Dendritic cell treated with granulocyte-macrophage colony-stimulating factor and Interleukin-4, amounts not matched to agents 40 ng/mL and 50 ng/mL, for 4 days (primary cell): ENCODE measurements at regions of chr11 and their contacts with region 1.

Region 1: DNA sequence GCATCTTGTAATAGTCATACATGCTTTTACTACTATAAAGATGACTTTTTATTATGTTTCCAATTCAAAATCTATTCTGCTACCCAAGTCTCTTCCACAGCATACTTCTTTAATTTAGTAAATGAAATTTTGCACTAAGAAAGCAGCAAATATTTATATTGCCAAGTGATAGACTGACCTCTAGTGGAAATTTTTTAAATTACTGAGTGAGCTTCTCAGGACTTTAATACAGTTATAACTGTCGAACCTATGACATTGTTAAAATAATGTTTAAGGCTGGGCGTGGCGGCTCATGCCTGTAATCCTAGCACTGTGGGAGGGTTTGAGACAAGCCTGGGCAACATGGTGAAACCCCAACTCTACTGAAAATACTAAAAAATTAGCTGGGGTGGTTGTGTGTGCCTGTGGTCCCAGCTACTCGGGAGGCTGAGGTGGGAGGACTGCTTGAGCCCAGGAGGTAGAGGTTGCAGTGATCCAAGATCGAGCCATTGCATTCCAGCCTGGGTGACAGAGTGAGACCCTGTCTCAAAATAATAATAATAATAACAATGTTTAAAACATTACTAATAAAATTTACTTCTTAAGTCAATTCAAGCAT is 27.3 kb downstream of the STK33 start:
- H3K4me3 Mint-ChIP-seq: no peak overlapping the region
- H3K27ac Mint-ChIP-seq: no peak overlapping the region
- H3K4me1 Mint-ChIP-seq: no peaks in the 10 kb centered on the region
- H3K27me3 Mint-ChIP-seq: peaks cover 2% of the 10 kb centered on the region

Region 2: GRCh38 chr11:8033305-8034105 is 533.2 kb before region 1 on chr11:
- intact Hi-C with region 1: loop called (anchors 10 kb)
- H3K4me3 Mint-ChIP-seq: no peak overlapping the region
- H3K27ac Mint-ChIP-seq: no peak overlapping the region
- H3K4me1 Mint-ChIP-seq: peaks cover 5% of the 10 kb centered on the region
- H3K27me3 Mint-ChIP-seq: peaks cover 17% of the 10 kb centered on the region

Region 3: DNA sequence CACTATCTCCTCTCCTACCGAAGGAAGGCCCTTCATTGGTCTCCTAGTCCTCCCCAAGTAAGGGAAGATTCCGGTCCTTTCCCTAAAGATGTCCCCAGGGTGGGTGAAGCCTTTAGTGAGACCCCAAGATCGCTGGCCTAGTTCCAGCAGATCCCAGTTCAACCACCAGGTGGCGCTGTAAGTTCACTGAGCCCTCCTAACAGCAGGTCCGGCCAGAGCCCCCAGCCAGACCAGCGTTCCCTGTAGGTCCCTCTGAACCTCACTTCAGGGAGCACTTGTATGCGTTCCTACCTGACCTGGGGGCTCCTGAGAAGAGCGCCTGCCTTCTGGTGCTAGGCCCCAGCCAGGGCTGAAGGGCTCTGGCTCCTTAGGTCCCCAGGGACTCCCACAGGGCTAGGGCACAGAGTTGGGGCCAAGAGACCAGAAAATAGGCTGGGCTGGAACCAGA is 341.1 kb before region 1 on chr11:
- intact Hi-C with region 1: loop called (anchors 1 kb)
- H3K4me3 Mint-ChIP-seq: no peak overlapping the region
- H3K27ac Mint-ChIP-seq: no peak overlapping the region
- H3K4me1 Mint-ChIP-seq: peaks cover 10% of the 10 kb centered on the region
- H3K27me3 Mint-ChIP-seq: peaks cover 7% of the 10 kb centered on the region

Region 4: GRCh38 chr11:8298801-8299786 is 267.6 kb before region 1 on chr11:
- intact Hi-C with region 1: no loop called
- H3K4me3 Mint-ChIP-seq: no peak overlapping the region
- H3K27ac Mint-ChIP-seq: no peak overlapping the region
- H3K4me1 Mint-ChIP-seq: no peaks in the 10 kb centered on the region
- H3K27me3 Mint-ChIP-seq: peaks cover 11% of the 10 kb centered on the region

Region 5: DNA sequence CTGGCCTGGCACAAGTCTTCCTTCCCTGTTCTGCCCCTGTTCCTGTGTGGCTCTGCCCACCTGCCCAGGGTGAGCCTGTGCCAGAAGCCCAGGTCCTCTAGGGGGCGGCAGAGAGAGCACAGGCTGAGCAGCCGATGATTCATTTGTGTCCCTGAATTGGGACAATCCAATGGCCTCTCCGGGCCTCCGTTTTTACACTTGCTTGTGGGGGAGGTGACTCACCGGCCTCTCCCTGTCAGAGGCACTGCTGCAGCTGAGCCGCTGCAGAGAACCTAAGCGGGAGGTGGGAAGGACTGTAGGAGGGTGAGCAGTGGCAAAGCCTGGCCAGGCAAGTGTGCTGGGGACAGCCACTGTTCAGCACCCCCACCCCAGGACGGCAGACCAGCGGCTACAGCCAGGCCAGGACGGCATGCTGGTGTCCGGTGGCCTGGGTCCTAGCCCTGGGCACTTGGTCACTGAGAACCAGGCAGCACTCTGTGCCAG is 237.8 kb before region 1 on chr11:
- intact Hi-C with region 1: loop called (anchors 5 kb)
- H3K4me3 Mint-ChIP-seq: no peak overlapping the region
- H3K27ac Mint-ChIP-seq: no peak overlapping the region
- H3K4me1 Mint-ChIP-seq: peaks cover 53% of the 10 kb centered on the region
- H3K27me3 Mint-ChIP-seq: peaks cover 8% of the 10 kb centered on the region

Region 6: GRCh38 chr11:8342821-8343681 is 223.7 kb before region 1 on chr11:
- intact Hi-C with region 1: loop called (anchors 5 kb)
- H3K4me3 Mint-ChIP-seq: no peak overlapping the region
- H3K27ac Mint-ChIP-seq: no peak overlapping the region
- H3K4me1 Mint-ChIP-seq: peaks cover 35% of the 10 kb centered on the region
- H3K27me3 Mint-ChIP-seq: peaks cover 3% of the 10 kb centered on the region